ENCODE measurements at regions of chr13 and their contacts with region 1.

Region 1: DNA sequence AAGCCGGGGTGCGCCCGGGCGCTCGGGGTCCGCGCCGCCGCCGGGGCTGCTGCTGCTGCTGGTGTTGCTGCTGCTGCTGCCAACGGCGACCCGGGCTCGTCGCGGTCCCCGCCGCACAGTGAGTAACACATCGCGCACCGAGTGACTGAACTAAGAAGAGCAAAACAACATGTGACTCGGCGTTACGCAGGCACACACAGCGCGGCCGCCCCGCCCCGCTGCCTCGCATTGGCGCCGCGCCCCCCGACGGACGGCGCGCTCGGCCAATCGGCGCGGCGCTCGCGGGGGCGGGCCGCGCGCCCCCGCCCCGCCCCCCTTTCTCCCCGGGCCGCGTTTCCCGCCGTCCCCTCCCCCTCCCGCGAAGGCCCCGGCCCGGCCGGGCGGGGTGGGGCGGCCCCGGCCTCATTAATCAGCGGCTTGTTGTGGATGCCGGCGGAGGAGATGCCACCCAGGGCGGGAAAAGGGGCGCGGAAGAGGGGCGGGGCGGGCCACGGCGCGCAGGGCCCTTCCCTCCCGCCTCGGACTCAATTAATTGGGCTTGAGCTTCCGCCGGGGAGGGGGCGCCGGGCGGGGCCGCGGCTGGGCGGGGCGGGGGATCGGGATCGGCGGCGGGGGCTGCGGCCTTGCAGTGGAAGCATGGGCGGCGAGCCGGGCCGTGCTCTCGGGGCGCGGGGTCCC is at the start of gene IRS2:
- DNase-seq: peak; percentile 97
- total RNA-seq, gene IRS2: 12.0 TPM

Region 2: GRCh38 chr13:109145631-109146030 is 641.0 kb before region 1 on chr13:
- intact Hi-C with region 1: loop called (anchors 5 kb)
- DNase-seq: no peak

Region 3: GRCh38 chr13:109281017-109281902 is 505.3 kb before region 1 on chr13:
- intact Hi-C with region 1: loop called (anchors 10 kb)
- DNase-seq: no peak

Region 4: DNA sequence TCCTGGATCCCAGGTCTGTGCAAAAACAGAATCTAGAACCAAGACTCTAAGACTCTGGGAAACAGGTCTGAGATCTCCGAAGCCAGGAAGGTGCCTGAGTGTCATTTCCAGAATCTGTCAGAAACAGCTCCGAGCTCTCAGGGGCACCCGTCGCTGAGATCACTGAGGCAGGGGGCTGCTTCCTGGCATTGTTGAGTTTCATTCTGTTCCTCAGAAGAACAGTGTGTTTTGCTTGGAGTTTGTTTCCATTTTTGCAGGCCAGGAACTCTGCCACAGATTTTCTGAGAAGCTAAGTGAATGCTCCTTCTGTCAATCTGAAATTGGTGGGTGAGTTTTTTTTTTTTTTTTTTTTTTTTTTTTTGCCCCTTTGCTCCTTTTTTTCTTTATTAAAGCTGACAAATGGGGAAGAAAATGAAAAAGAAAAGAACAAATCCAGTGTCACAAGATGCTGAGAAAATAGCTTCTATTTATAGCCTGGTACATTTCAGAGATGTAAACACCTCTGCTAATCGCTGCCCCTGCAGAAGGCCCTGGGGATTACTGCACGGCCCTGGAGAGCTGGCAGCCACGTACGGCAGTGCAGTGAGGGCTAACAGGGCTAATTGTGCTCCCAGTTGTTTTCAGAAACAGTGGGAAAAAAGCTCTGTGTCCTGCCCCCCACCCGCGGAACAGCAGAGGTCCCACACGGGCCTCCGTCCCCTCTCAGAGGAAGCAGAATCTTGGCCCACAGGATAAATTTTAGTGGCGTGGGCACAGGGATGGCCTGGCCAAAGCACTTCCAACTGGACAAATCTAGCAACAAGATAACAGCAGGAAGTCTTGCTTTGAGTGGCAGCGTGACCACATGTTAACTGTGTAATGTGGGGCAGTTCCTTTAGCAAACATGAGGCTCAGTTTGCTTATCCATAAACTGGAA is 237.4 kb after region 1 on chr13:
- intact Hi-C with region 1: loop called (anchors 5 kb)
- DNase-seq: no peak

Region 5: DNA sequence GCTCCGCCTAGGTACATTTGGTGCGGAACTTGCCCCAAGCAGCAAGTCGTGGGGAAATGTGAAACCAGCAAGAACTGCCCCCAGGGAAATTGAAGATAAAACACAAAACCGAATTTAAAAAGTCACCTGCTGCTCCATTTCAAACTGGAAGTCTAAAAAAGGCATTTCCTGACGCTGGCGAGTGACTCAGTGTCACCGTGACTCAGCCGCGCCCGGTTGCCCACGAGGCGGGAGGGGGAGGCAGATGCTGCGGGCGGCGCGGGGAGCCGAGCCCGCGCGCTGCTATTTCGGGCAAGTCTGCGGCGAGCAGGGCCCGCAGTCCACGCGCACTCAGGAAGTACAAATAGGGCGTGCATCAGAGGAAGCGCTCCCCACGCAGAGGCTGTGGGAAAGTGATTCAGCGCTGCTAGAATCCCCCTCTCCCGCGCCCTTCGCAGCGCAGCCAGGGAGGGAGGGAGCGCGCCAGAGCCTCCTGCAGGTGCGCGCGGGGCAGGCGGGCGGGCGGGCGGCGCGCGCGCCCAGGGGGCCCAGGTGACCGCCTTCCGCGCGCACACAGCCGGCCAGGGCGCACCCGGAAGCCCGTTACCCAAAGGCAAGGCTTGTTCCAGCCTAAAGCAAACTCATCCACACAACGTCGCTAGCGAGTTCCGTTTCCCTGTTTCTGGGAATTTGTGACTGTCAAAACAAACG is 351.6 kb after region 1 on chr13:
- intact Hi-C with region 1: loop called (anchors 5 kb)
- DNase-seq: peak; percentile 91

Measured in cardiac septum (tissue), 1 donor.